ENCODE measurements at regions of chr7 and their contacts with region 1.

Region 1: DNA sequence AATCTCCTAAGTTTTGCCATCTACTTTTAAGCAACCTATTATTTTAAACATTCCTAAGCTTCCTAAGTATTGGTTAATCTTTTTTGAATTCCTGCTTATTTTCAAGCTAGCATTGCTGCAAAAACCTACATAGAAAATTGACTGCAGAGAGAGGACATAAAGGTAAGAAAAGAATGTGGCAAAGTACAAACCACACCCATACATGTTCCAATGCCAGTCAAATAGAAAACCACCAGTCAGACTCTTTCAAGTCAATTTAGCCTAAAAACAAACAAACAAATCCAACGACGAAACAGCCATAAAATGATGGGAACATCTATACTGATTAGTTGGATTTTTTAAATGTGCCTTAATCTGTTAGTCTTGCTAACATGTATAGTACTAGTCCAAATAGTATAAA is 804.8 kb downstream of the GRM8 start:
- DNase-seq: no peak
- H3K4me3 Mint-ChIP-seq: no peak overlapping the region
- H3K27ac Mint-ChIP-seq: no peak overlapping the region
- H3K4me1 Mint-ChIP-seq: no peaks in the 10 kb centered on the region
- H3K27me3 Mint-ChIP-seq: no peaks in the 10 kb centered on the region

Region 2: GRCh38 chr7:126378642-126379041 is 69.3 kb before region 1 on chr7:
- intact Hi-C with region 1: no loop called
- DNase-seq: no peak
- H3K4me3 Mint-ChIP-seq: no peak overlapping the region
- H3K27ac Mint-ChIP-seq: no peak overlapping the region
- H3K4me1 Mint-ChIP-seq: no peaks in the 10 kb centered on the region
- H3K27me3 Mint-ChIP-seq: no peaks in the 10 kb centered on the region

Region 3: GRCh38 chr7:126411032-126411820 is 36.8 kb before region 1 on chr7:
- intact Hi-C with region 1: no loop called
- DNase-seq: no peak
- H3K4me3 Mint-ChIP-seq: no peak overlapping the region
- H3K27ac Mint-ChIP-seq: no peak overlapping the region
- H3K4me1 Mint-ChIP-seq: no peaks in the 10 kb centered on the region
- H3K27me3 Mint-ChIP-seq: no peaks in the 10 kb centered on the region

Region 4: DNA sequence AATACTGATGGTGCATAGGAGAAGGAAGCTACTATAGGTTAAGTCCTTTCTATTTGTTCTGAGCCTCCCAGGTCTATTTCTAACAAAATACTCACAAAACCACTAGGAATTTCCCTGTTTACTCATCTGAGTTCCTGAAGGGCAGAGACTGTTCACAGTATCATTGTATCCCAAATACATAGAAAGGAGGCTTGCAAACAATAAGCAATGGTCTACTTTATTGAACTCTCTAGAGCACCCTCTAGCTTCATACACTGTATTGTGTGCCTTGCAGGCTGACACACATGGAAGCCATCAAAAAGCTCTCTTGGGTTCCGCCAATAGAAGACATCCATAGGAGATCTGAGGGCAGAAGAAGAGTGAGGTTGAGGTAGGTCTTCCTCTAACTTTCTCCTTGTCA is 21.3 kb before region 1 on chr7:
- intact Hi-C with region 1: loop called (anchors 1 kb)
- DNase-seq: no peak
- H3K4me3 Mint-ChIP-seq: no peak overlapping the region
- H3K27ac Mint-ChIP-seq: no peak overlapping the region
- H3K4me1 Mint-ChIP-seq: no peaks in the 10 kb centered on the region
- H3K27me3 Mint-ChIP-seq: no peaks in the 10 kb centered on the region